CD8-positive, alpha-beta T cell (primary cell): ENCODE measurements at regions of chr4 and their contacts with region 1.

Region 1: GRCh38 chr4:170027181-170027829 is 1.1 kb upstream of the MFAP3L start:
- DNase-seq: peak; percentile 77 to 94 (median 87)
- ATAC-seq: peak; percentile 76
- H3K4me3 ChIP-seq: peak overlapping the region; percentile 84
- H3K4me3 Mint-ChIP-seq: peak overlapping the region; percentile 93
- H3K27ac ChIP-seq: peak overlapping the region; percentile 6 to 65
- H3K27ac Mint-ChIP-seq: peak overlapping the region; percentile 60
- H3K4me1 ChIP-seq: peaks cover 5% of the 10 kb centered on the region
- H3K4me1 Mint-ChIP-seq: peaks cover 17% of the 10 kb centered on the region
- H3K27me3 ChIP-seq: peaks cover 0 to 5% of the 10 kb centered on the region in 2 experiments
- H3K27me3 Mint-ChIP-seq: peaks cover 7% of the 10 kb centered on the region
- CTCF ChIP-seq: no peak

Region 2: GRCh38 chr4:168318266-168318895 is 1708.9 kb before region 1 on chr4 and contains the start of gene DDX60:
- CTCF ChIA-PET with region 1: no interaction called
- POLR2A ChIA-PET with region 1: no interaction called
- intact Hi-C with region 1: loop called (anchors 2 to 5 kb)
- DNase-seq: peak; percentile 65 to 96 (median 85)
- ATAC-seq: peak; percentile 94
- H3K4me3 ChIP-seq: peak within 1 kb of the TSS; percentile 95 to 100
- H3K4me3 Mint-ChIP-seq: peak within 1 kb of the TSS; percentile 98
- H3K27ac ChIP-seq: peak within 1 kb of the TSS; percentile 99
- H3K27ac Mint-ChIP-seq: peak within 1 kb of the TSS; percentile 99
- H3K4me1 ChIP-seq: peaks cover 24% of the 10 kb centered on the region
- H3K4me1 Mint-ChIP-seq: peaks cover 43% of the 10 kb centered on the region
- H3K27me3 ChIP-seq: no peaks in the 10 kb centered on the region
- H3K27me3 Mint-ChIP-seq: no peaks in the 10 kb centered on the region
- CTCF ChIP-seq: no peak
- total RNA-seq, gene DDX60: 8.2 to 10.1 TPM

Region 3: DNA sequence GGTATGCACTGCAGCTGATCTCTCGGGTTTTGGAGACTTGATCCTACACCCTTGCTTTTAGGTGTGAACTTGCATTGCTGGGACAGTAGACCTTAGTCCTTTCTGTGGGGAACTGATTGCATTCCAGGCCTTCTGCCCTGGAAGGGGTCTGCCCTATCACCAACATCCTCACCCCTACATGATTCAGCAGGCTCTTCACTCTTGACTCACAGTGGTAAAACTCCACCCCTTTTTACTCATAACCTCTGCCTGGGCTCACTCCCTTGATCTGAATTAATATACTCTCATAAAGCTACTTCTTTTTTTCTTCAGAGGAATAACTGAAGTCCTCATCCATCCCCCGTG is 1540.4 kb before region 1 on chr4:
- CTCF ChIA-PET with region 1: no interaction called
- POLR2A ChIA-PET with region 1: no interaction called
- intact Hi-C with region 1: loop called (anchors 5 kb)
- DNase-seq: peak in 1 of 9 experiments; percentile 11
- ATAC-seq: no peak
- H3K4me3 ChIP-seq: no peak overlapping the region
- H3K4me3 Mint-ChIP-seq: no peak overlapping the region
- H3K27ac ChIP-seq: no peak overlapping the region
- H3K27ac Mint-ChIP-seq: no peak overlapping the region
- H3K4me1 ChIP-seq: peaks cover 17% of the 10 kb centered on the region
- H3K4me1 Mint-ChIP-seq: peaks cover 17% of the 10 kb centered on the region
- H3K27me3 ChIP-seq: no peaks in the 10 kb centered on the region
- H3K27me3 Mint-ChIP-seq: peaks cover 3% of the 10 kb centered on the region
- CTCF ChIP-seq: no peak

Region 4: DNA sequence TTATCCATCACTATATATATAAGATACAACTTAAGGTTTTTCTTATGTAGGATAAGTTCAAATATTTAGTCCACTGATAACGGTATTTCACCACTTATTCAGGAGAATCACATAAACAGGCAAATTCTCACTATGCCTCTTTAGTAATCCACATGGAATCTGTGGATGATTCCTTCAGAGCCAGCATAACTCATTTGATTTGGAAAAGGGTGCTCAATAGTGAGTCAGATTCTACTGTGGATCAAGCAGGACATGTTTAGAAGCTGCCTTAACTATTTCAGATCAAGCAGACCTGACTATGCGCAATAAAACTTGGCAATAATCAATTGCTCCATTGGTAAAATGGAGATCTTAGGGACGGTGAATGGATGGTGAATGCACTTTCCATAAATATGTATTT is 1201.3 kb before region 1 on chr4:
- CTCF ChIA-PET with region 1: no interaction called
- POLR2A ChIA-PET with region 1: no interaction called
- intact Hi-C with region 1: loop called in 1 of 2 experiments (anchors 5 kb)
- DNase-seq: no peak
- ATAC-seq: no peak
- H3K4me3 ChIP-seq: no peak overlapping the region
- H3K4me3 Mint-ChIP-seq: no peak overlapping the region
- H3K27ac ChIP-seq: no peak overlapping the region
- H3K27ac Mint-ChIP-seq: no peak overlapping the region
- H3K4me1 ChIP-seq: no peaks in the 10 kb centered on the region
- H3K4me1 Mint-ChIP-seq: peaks cover 3% of the 10 kb centered on the region
- H3K27me3 ChIP-seq: no peaks in the 10 kb centered on the region
- H3K27me3 Mint-ChIP-seq: peaks cover 17% of the 10 kb centered on the region
- CTCF ChIP-seq: no peak

Region 5: DNA sequence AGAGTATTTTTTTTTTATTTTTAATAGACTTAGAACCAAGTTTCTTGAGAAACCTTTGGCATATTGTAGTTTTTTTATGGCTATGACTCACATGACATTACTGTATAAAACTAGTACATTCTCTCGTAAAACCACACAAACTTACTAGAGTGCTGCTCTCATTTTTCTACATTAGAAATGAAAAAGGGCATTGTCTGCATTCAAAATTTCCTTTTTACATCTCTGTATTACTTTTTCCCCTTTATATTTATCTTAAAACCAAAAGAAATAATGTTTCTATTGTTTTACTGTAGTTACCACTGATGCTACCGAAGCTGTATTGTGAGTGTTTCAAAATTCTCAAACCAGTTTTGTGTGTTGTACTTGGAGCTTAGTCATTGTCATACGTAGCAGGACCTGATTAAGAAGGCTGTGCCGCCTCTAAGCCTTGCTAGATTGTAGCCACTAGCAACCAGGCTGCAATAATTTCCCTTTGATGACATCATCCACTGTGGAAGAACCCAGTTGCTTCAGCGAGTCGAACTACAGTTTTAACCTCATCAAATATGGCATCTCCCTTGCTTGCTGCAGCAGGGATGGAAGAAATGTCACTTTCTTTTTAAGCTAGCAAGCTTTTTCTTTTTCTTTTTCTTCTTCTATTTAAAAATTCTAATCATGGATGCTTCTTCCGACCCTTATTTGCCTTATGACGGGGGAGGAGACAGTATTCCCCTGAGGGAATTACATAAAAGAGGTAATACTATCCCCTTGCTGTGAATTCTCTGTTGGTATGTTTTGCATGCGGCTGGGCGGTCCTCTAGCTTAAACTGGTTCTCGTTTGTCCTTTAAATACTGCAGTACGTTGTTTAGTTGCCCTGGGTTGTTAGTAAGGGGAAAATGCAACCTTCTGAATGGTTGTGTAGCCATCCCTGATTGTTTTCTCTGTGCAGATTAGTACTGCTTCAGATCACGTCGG is 367.3 kb before region 1 on chr4:
- CTCF ChIA-PET with region 1: no interaction called
- POLR2A ChIA-PET with region 1: no interaction called
- intact Hi-C with region 1: loop called in 1 of 2 experiments (anchors 2 kb)
- DNase-seq: peak; percentile 29 to 91 (median 62)
- ATAC-seq: peak; percentile 96
- H3K4me3 ChIP-seq: peak overlapping the region; percentile 13 to 16
- H3K4me3 Mint-ChIP-seq: peak overlapping the region; percentile 80
- H3K27ac ChIP-seq: peak overlapping the region; percentile 13 to 45
- H3K27ac Mint-ChIP-seq: peak overlapping the region; percentile 88
- H3K4me1 ChIP-seq: peaks cover 23% of the 10 kb centered on the region
- H3K4me1 Mint-ChIP-seq: peaks cover 45% of the 10 kb centered on the region
- H3K27me3 ChIP-seq: no peaks in the 10 kb centered on the region
- H3K27me3 Mint-ChIP-seq: no peaks in the 10 kb centered on the region
- CTCF ChIP-seq: no peak